ENCODE measurements at regions of chr1 and their contacts with region 1.

Region 1: GRCh38 chr1:243343970-243344937 is 88.4 kb downstream of the SDCCAG8 start:
- DNase-seq: peak; percentile 63
- H3K4me3 ChIP-seq: no peak overlapping the region
- H3K27ac ChIP-seq: no peak overlapping the region
- H3K4me1 ChIP-seq: no peaks in the 10 kb centered on the region
- CTCF ChIP-seq: peak; percentile 91

Region 2: DNA sequence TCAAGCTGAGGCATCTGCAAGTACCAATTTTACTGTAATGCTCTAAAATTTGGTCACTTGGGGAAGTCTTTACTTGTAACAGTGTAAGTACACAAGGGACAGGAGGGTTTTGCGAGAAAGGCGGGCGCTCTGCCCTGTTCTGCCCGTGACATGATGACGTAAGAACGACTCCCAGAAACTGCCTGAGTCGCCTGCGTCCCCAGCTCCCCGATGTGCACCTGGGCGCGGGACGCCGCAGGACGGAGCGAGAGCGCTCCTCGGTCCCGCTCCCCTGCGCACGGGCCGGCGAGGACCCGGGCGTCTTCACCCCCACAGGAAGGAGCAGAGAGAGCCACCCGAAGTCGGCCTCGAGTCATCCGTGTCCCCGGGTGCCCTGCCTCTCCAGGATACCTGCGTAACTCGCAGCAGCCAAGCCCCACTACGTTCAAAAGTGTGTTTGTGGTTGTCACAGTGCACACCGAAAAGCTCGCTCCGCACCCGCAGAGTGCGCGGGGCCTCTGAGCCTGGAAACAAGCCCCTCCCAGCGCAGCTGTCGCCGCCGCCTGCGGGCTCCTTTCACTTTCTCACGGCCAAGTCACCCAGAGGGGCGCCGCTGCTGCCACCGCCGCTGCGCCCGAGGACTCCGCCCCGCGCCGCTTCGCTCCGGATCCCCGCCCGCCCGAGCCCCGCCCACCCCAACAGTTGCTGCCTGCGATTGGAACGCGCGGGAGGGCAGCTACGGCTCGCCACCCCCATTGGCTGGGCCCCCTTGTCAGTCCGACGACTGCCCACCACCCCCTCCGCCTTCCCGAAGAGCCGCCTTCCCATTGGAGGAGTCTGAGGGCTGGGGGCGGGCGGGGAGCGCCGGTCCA is 703.6 kb after region 1 on chr1:
- CTCF ChIA-PET with region 1: no interaction called
- POLR2A ChIA-PET with region 1: no interaction called
- intact Hi-C with region 1: loop called (anchors 5 kb)
- DNase-seq: no peak
- H3K4me3 ChIP-seq: peak overlapping the region; percentile 81
- H3K27ac ChIP-seq: peak overlapping the region; percentile 71
- H3K4me1 ChIP-seq: peaks cover 41% of the 10 kb centered on the region
- CTCF ChIP-seq: no peak